B cell (primary cell): ENCODE measurements at regions of chr11 and their contacts with region 1.

Region 1: DNA sequence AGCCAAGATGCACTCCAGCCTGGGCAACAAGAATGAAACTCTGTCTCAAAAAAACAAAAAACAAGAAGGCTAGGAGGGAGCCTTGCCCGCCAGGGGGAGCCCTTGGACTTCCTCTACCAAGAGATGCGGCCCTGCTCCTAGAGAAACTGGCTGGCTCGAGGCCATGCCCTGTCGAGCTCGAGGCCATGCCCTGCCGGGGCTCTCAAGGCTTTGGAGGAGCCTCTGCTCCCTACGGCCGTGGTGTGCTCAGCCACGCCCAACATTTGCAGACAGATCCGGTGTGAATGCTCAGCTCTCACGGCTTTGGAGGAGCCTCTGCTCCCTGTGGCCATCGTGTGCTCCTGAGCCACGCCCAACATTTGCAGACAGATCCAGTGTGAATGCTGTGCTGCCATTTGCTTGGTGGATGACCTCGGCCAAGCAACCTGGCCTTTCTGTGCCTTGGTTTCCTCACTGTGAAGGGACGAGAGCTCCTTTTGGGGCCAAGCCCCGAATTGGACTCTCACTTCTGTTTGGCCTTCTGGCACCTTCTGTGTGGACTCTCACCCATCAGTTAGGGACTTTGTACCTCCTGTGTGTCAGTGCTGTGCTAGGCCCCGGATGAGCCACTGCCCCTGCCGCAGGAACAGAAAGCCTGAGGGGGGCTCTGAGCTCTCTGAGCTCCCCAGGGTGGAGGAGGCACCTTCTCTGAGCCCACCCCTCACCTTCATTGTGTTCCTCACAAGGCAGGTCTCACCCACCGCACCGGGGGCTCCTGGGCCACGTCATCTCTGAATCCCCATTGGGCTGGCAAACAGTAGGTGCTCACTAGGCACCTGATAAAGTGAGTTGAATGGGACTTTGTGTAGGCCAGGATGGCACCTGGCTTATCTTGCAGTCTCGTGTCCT is 14.1 kb downstream of the C11orf24 start:
- DNase-seq: peak; percentile 91
- ATAC-seq: peak; percentile 94
- H3K4me3 ChIP-seq: no peak overlapping the region
- H3K4me3 Mint-ChIP-seq: peak overlapping the region; percentile 52
- H3K27ac ChIP-seq: peak overlapping the region; percentile 4 to 38
- H3K27ac Mint-ChIP-seq: peak overlapping the region; percentile 91
- H3K4me1 ChIP-seq: peaks cover 11 to 21% of the 10 kb centered on the region in 2 donors
- H3K4me1 Mint-ChIP-seq: peaks cover 24% of the 10 kb centered on the region
- H3K27me3 ChIP-seq: no peaks in the 10 kb centered on the region
- H3K27me3 Mint-ChIP-seq: no peaks in the 10 kb centered on the region
- CTCF ChIP-seq: peak; percentile 92

Region 2: DNA sequence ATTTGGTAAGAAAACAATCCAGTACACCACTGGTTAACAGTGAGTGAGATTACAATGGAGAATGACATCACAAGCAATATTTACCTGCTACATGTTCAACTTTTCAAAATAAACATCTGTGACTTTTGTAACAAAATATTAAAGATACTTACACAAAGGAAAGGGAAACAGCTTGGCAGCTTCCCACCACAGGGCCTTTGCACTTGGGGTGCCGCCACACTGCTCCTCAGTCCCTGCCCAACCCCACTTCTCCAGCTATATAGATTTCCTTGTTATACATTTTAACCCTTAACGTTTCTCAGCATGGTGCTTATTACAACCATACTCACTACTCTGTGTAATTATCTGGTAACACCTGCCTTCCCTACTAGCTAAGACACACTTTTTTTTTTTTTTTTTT is 55.6 kb before region 1 on chr11:
- CTCF ChIA-PET with region 1: no interaction called
- POLR2A ChIA-PET with region 1: no interaction called
- intact Hi-C with region 1: no loop called
- DNase-seq: no peak
- ATAC-seq: no peak
- H3K4me3 ChIP-seq: no peak overlapping the region
- H3K4me3 Mint-ChIP-seq: no peak overlapping the region
- H3K27ac ChIP-seq: no peak overlapping the region
- H3K27ac Mint-ChIP-seq: no peak overlapping the region
- H3K4me1 ChIP-seq: peaks cover 25 to 34% of the 10 kb centered on the region in 2 donors
- H3K4me1 Mint-ChIP-seq: peaks cover 68% of the 10 kb centered on the region
- H3K27me3 ChIP-seq: no peaks in the 10 kb centered on the region
- H3K27me3 Mint-ChIP-seq: no peaks in the 10 kb centered on the region
- CTCF ChIP-seq: no peak

Region 3: DNA sequence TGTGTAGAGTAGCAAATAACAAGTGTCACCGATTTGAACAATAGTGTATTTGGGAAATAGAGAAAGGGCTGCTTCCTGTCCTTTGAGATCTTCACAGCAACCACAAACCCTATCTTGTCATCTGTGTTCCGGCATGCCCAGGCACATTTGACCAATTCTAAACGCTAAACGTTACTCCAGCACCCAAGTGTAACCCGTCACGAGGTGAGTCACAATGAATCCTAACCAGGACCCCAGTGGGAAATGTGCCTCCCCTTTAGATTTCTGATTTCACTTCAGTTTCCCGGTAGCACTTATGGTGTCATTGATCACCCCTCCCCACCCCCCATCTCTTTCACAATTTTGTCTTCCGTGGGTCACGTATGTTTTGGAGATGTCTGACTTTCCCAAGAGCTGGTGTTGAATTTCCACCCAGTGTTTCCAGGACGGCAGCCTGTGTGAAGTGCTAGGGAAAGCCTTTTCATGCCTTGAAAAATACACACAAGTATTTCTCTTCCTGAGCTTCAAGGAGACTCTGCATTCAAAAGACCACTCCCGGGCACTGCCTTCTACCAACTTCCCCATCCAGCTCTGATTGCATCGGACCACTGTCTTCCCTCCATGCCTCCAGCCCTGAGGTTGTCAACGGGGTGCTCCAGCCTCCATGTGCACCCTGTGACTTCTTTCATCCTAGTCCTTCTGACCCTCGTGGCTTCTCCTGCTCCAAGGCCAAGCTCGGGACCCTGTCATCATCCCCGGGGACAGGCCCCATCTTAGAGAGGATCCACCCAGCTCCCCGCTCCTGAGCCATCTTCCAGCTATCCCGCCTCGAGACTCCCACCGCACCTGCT is 24.6 kb after region 1 on chr11:
- CTCF ChIA-PET with region 1: interaction called, 16 read pairs
- POLR2A ChIA-PET with region 1: no interaction called
- intact Hi-C with region 1: no loop called
- DNase-seq: peak; percentile 50
- ATAC-seq: peak; percentile 79
- H3K4me3 ChIP-seq: peak overlapping the region; percentile 2 to 44 (median 37)
- H3K4me3 Mint-ChIP-seq: peak overlapping the region; percentile 82
- H3K27ac ChIP-seq: peak overlapping the region; percentile 1 to 63
- H3K27ac Mint-ChIP-seq: peak overlapping the region; percentile 79
- H3K4me1 ChIP-seq: peaks cover 16 to 17% of the 10 kb centered on the region in 2 donors
- H3K4me1 Mint-ChIP-seq: peaks cover 28% of the 10 kb centered on the region
- H3K27me3 ChIP-seq: no peaks in the 10 kb centered on the region
- H3K27me3 Mint-ChIP-seq: no peaks in the 10 kb centered on the region
- CTCF ChIP-seq: no peak

Region 4: GRCh38 chr11:68287419-68287818 is 29.7 kb after region 1 on chr11:
- CTCF ChIA-PET with region 1: interaction called, 26 read pairs
- POLR2A ChIA-PET with region 1: no interaction called
- intact Hi-C with region 1: no loop called
- DNase-seq: no peak
- ATAC-seq: no peak
- H3K4me3 ChIP-seq: no peak overlapping the region
- H3K4me3 Mint-ChIP-seq: no peak overlapping the region
- H3K27ac ChIP-seq: no peak overlapping the region
- H3K27ac Mint-ChIP-seq: no peak overlapping the region
- H3K4me1 ChIP-seq: peaks cover 6 to 12% of the 10 kb centered on the region in 2 donors
- H3K4me1 Mint-ChIP-seq: peaks cover 20% of the 10 kb centered on the region
- H3K27me3 ChIP-seq: no peaks in the 10 kb centered on the region
- H3K27me3 Mint-ChIP-seq: no peaks in the 10 kb centered on the region
- CTCF ChIP-seq: no peak

Region 5: GRCh38 chr11:68297812-68298658 is 40.3 kb after region 1 on chr11:
- CTCF ChIA-PET with region 1: interaction called, 427 read pairs
- POLR2A ChIA-PET with region 1: interaction called, 13 read pairs
- intact Hi-C with region 1: loop called (anchors 1 kb)
- DNase-seq: peak; percentile 85
- ATAC-seq: peak; percentile 95
- H3K4me3 ChIP-seq: no peak overlapping the region
- H3K4me3 Mint-ChIP-seq: peak overlapping the region; percentile 69
- H3K27ac ChIP-seq: no peak overlapping the region
- H3K27ac Mint-ChIP-seq: peak overlapping the region; percentile 67
- H3K4me1 ChIP-seq: peaks cover 40 to 45% of the 10 kb centered on the region in 2 donors
- H3K4me1 Mint-ChIP-seq: peaks cover 36% of the 10 kb centered on the region
- H3K27me3 ChIP-seq: no peaks in the 10 kb centered on the region
- H3K27me3 Mint-ChIP-seq: no peaks in the 10 kb centered on the region
- CTCF ChIP-seq: peak; percentile 95

Region 6: GRCh38 chr11:68312117-68312779 is 54.5 kb after region 1 on chr11 and contains the start of gene LRP5:
- CTCF ChIA-PET with region 1: interaction called, 10 read pairs
- POLR2A ChIA-PET with region 1: interaction called, 8 read pairs
- intact Hi-C with region 1: no loop called
- DNase-seq: peak; percentile 25
- ATAC-seq: peak; percentile 66
- H3K4me3 ChIP-seq: peak within 1 kb of the TSS; percentile 21 to 62 (median 42)
- H3K4me3 Mint-ChIP-seq: peak within 1 kb of the TSS; percentile 84
- H3K27ac ChIP-seq: no peak within 1 kb of the TSS
- H3K27ac Mint-ChIP-seq: peak within 1 kb of the TSS; percentile 71
- H3K4me1 ChIP-seq: peaks cover 14 to 17% of the 10 kb centered on the region in 2 donors
- H3K4me1 Mint-ChIP-seq: peaks cover 14% of the 10 kb centered on the region
- H3K27me3 ChIP-seq: peaks cover 0 to 42% (median 17%) of the 10 kb centered on the region in 4 experiments
- H3K27me3 Mint-ChIP-seq: peaks cover 22% of the 10 kb centered on the region
- CTCF ChIP-seq: no peak
- total RNA-seq, gene LRP5: 13.9 and 15.7 TPM in 2 replicates